ENCODE measurements at regions of chr1 and their contacts with region 1.

Region 1: DNA sequence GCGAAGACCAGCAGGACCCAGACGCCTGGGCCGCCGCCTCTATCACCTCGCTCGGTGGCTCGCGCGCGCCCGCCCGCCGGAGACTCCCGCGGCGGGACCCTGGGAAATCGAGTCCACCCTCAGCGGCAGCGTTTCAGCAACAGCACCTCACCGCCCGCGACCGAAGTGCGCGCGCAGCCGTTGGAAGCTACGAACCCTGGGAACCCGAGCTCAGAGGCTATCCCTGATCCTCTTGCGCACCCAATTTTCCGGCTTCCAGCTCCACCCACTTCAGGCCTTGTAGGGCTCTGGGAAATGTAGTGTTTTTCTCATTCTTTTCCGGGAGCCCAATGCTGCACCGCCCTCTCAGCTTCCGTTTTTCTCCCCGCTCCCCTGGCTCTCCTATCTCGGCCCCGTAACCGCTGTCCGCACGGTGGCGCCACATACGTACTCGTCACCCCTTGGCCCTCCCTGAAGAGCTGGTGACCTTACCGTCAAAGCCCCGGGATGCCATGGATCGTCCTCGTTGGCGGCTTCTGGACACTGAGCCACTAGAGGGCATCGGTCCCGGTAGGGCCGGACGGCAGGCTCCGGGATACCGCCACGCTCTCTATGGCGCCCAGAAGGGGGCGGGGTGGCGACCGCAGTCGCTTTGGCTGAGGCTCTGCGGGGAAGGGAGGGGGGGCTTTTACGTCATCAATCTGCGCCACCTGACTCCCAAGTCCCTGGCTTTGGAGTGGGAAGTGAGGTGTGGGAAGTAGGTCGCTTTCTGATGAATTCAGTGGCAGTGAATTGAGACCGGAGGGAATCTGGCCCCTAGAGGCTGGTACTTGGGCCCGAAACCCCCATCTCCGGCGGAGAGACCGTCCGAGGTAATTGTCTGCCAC is at the starts of genes ODR4 and TPR:
- DNase-seq: peak; percentile 100
- ATAC-seq: peak; percentile 92
- H3K4me3 ChIP-seq: peak within 1 kb of the TSS; percentile 62
- H3K27ac ChIP-seq: peak within 1 kb of the TSS; percentile 92
- H3K4me1 ChIP-seq: peaks cover 2% of the 10 kb centered on the region; the same call in 1 of the 2 replicates
- H3K27me3 ChIP-seq: no peaks in the 10 kb centered on the region
- CTCF ChIP-seq: peak; percentile 92
- POLR2A ChIP-seq: peak; percentile 91
- RAD21 ChIP-seq: peak; percentile 38
- total RNA-seq, gene ODR4: 9.7 and 14.2 TPM in 2 replicates
- total RNA-seq, gene TPR: 60.4 and 63.6 TPM in 2 replicates

Region 2: DNA sequence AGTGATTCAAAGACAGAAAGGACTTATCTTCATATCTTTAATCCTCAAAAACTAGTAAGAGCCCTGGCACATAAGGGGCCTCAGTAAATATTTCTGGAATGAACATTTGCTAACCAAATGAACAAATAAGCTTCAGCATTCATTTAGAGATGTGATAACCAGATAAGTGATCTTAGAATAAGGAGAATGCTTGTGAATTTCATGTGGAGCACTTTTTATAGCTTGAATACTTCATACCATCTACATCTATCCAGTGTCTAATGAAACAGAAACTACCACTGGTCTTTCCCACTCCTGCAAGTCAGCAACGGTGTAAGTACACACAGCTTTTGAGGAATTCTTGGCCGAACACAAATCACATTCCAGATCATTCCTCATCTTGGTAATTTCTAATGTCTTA is 1659.2 kb before region 1 on chr1:
- CTCF ChIA-PET with region 1: no interaction called
- POLR2A ChIA-PET with region 1: no interaction called
- dilution Hi-C with region 1: no loop called
- in situ Hi-C with region 1: loop called (anchors 25 kb)
- intact Hi-C with region 1: no loop called
- DNase-seq: peak; percentile 5
- ATAC-seq: peak; percentile 68
- H3K4me3 ChIP-seq: no peak overlapping the region
- H3K27ac ChIP-seq: no peak overlapping the region
- H3K4me1 ChIP-seq: no peaks in the 10 kb centered on the region
- H3K27me3 ChIP-seq: no peaks in the 10 kb centered on the region
- CTCF ChIP-seq: no peak
- POLR2A ChIP-seq: no peak
- RAD21 ChIP-seq: no peak

Region 3: DNA sequence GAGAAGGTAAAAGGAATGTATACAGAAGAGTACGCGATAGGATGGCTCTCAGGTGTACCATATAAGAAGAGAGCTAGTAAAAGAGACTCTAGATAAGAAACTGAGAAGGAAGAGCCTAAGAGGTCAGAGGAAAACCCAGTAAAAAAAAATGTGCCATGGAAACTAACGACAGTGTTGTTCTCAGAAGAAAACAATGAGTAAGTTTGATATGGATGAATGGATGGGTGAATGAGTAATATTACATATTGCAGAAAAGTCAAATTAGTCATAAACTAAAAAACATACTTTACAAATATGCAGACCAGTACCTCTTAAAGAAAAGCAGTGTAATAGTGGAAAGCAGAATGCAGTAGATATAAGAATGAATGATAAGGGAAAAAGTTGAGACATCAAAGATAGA is 325.0 kb before region 1 on chr1:
- CTCF ChIA-PET with region 1: no interaction called
- POLR2A ChIA-PET with region 1: no interaction called
- dilution Hi-C with region 1: no loop called
- in situ Hi-C with region 1: no loop called
- intact Hi-C with region 1: no loop called
- DNase-seq: peak; percentile 43
- ATAC-seq: no peak
- H3K4me3 ChIP-seq: no peak overlapping the region
- H3K27ac ChIP-seq: no peak overlapping the region
- H3K4me1 ChIP-seq: 0 out of 2 replicates have a peak, but pooled peaks cover 2% of the 10 kb centered on the region
- H3K27me3 ChIP-seq: no peaks in the 10 kb centered on the region
- CTCF ChIP-seq: no peak
- POLR2A ChIP-seq: no peak
- RAD21 ChIP-seq: no peak

Region 4: GRCh38 chr1:186386725-186387383 is 11.5 kb after region 1 on chr1:
- CTCF ChIA-PET with region 1: interaction called, 13 read pairs
- POLR2A ChIA-PET with region 1: no interaction called
- dilution Hi-C with region 1: no loop called
- in situ Hi-C with region 1: no loop called
- intact Hi-C with region 1: no loop called
- DNase-seq: no peak
- ATAC-seq: no peak
- H3K4me3 ChIP-seq: no peak overlapping the region
- H3K27ac ChIP-seq: no peak overlapping the region
- H3K4me1 ChIP-seq: no peaks in the 10 kb centered on the region
- H3K27me3 ChIP-seq: no peaks in the 10 kb centered on the region
- CTCF ChIP-seq: no peak
- POLR2A ChIP-seq: no peak
- RAD21 ChIP-seq: no peak